ENCODE measurements at regions of chr5 and their contacts with region 1.

Region 1: GRCh38 chr5:17216176-17216973 is 1.1 kb upstream of the BASP1 start:
- DNase-seq: peak in 10 of 14 experiments; percentile 9 to 65 (median 38)
- ATAC-seq: peak; percentile 32
- H3K4me3 ChIP-seq: peak overlapping the region; percentile 19
- H3K4me3 Mint-ChIP-seq: peak overlapping the region; percentile 66
- H3K27ac ChIP-seq: no peak overlapping the region
- H3K27ac Mint-ChIP-seq: peak overlapping the region; percentile 9
- H3K4me1 ChIP-seq: peaks cover 24% of the 10 kb centered on the region
- H3K4me1 Mint-ChIP-seq: peaks cover 21% of the 10 kb centered on the region
- H3K27me3 ChIP-seq: peaks cover 25 to 37% of the 10 kb centered on the region in 2 experiments
- H3K27me3 Mint-ChIP-seq: peaks cover 40% of the 10 kb centered on the region
- CTCF ChIP-seq: peak; percentile 56

Region 2: DNA sequence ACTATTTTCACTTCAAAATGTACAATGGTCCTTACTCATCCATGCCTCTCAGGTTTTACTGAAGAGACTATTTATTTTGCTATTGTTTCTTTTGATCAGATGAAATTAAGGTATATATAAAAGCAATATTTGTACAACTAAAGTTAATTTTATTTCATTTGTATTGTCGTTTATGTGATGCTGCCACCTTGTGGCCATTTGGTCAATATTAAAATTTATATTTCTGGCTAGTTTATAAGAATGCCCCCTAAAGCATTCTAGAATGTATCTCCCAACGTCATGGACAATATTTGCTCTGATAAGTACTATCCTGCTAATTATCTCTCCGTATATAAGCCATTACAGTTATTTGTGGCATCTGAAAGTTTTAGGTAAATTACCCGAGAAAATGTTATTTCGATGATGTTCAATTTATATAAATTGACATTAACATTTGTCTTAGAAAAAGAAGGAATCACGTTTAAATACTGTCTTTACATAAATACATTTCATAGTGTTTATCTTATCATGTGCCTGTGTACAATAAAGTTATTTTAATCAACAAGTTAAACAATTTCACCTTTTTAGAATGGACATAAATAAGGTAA is 1097.9 kb after region 1 on chr5:
- CTCF ChIA-PET with region 1: no interaction called
- POLR2A ChIA-PET with region 1: no interaction called
- intact Hi-C with region 1: loop called in 1 of 2 experiments (anchors 2 kb)
- DNase-seq: peak in 3 of 14 experiments; percentile 9 to 15 (median 9)
- ATAC-seq: no peak
- H3K4me3 ChIP-seq: no peak overlapping the region
- H3K4me3 Mint-ChIP-seq: no peak overlapping the region
- H3K27ac ChIP-seq: no peak overlapping the region
- H3K27ac Mint-ChIP-seq: no peak overlapping the region
- H3K4me1 ChIP-seq: no peaks in the 10 kb centered on the region
- H3K4me1 Mint-ChIP-seq: no peaks in the 10 kb centered on the region
- H3K27me3 ChIP-seq: no peaks in the 10 kb centered on the region
- H3K27me3 Mint-ChIP-seq: no peaks in the 10 kb centered on the region
- CTCF ChIP-seq: peak; percentile 63

Measured in CD4-positive, alpha-beta T cell (primary cell).